ENCODE measurements at regions of chr10 and their contacts with region 1.

Region 1: DNA sequence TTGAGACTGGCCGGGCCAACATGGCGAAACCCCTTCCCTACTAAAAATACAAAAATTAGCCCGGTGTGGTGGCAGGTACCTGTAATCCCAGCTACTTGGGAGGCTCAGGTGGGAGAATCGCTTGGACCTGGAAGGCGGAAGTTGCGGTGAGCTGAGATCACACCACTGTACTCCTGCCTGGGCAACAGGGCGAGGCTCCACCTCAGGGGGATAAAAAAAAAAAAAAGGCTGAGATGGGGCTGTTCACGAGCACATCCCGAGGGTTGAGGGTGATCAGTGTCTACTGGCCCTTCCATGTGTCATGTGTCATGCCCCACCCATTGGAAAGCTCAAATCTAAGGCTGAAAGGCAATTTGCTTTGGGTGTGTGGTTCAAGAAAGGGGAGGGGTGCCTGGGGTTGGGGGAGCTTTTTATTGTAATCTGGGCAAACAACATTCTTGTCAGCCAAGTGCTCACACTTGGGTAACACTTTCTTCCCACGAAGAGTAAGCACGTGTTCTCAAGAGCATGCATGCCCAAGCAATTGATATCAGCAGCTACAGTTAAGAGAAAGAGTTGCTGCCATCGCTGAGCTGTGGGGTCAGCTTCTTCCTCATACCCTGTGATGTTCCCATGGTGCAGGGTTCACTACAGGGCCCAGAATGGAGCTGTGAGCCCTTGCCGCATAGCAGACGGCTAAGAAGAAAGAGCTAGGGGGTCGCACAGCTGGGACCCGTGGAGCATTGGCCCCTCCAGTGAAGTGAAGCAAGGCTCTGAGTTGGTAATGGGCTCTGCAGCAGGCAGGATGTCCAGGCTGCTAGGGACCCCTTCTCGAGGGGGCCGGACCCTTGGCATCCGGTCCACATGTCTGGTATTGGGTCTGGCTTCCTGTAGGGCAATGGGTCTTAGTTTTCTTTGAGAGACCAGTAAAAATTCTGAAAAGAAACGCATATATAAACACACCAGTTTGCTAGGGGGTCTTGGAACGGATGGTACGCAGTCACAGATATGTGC is 9.9 kb upstream of the ACSL5 start:
- DNase-seq: peak in 1 of 5 donors; percentile 17
- H3K4me3 ChIP-seq: no peak overlapping the region
- H3K4me3 Mint-ChIP-seq: peak overlapping the region in 1 of 7 donors; percentile 40
- H3K27ac ChIP-seq: no peak overlapping the region
- H3K27ac Mint-ChIP-seq: no peak overlapping the region
- H3K4me1 ChIP-seq: peaks cover 6% of the 10 kb centered on the region
- H3K4me1 Mint-ChIP-seq: peaks cover 11 to 21% (median 18%) of the 10 kb centered on the region in 3 donors
- H3K27me3 ChIP-seq: no peaks in the 10 kb centered on the region
- H3K27me3 Mint-ChIP-seq: peaks cover 0 to 5% of the 10 kb centered on the region in 2 donors

Region 2: GRCh38 chr10:112375721-112376395 is 11.9 kb after region 1 on chr10:
- CTCF ChIA-PET with region 1: interaction called, 12 read pairs
- POLR2A ChIA-PET with region 1: interaction called, 7 read pairs
- DNase-seq: peak; percentile 27 to 69 (median 66)
- H3K4me3 ChIP-seq: peak overlapping the region; percentile 92
- H3K4me3 Mint-ChIP-seq: peak overlapping the region; percentile 97 to 100 (median 99)
- H3K27ac ChIP-seq: peak overlapping the region; percentile 92
- H3K27ac Mint-ChIP-seq: peak overlapping the region; percentile 97 to 100 (median 100)
- H3K4me1 ChIP-seq: peaks cover 50% of the 10 kb centered on the region
- H3K4me1 Mint-ChIP-seq: peaks cover 76 to 94% (median 88%) of the 10 kb centered on the region in 3 donors
- H3K27me3 ChIP-seq: no peaks in the 10 kb centered on the region
- H3K27me3 Mint-ChIP-seq: peaks cover 0 to 2% of the 10 kb centered on the region in 2 donors

Measured in CD8-positive, alpha-beta memory T cell (primary cell).